Esophagus squamous epithelium (tissue), 5 donors: ENCODE measurements at regions of chr7 and their contacts with region 1.

Region 1: GRCh38 chr7:71961283-71961682 is 450.9 kb downstream of the CALN1 start:
- DNase-seq: no peak
- H3K4me3 ChIP-seq: no peak overlapping the region
- H3K27ac ChIP-seq: no peak overlapping the region
- H3K4me1 ChIP-seq: no peaks in the 10 kb centered on the region
- H3K27me3 ChIP-seq: no peaks in the 10 kb centered on the region
- CTCF ChIP-seq: no peak
- POLR2A ChIP-seq: no peak

Region 2: GRCh38 chr7:71896535-71896934 is 64.7 kb before region 1 on chr7:
- intact Hi-C with region 1: loop called (anchors 10 kb)
- DNase-seq: no peak
- H3K4me3 ChIP-seq: no peak overlapping the region
- H3K27ac ChIP-seq: no peak overlapping the region
- H3K4me1 ChIP-seq: no peaks in the 10 kb centered on the region
- H3K27me3 ChIP-seq: no peaks in the 10 kb centered on the region
- CTCF ChIP-seq: no peak
- POLR2A ChIP-seq: no peak

Region 3: DNA sequence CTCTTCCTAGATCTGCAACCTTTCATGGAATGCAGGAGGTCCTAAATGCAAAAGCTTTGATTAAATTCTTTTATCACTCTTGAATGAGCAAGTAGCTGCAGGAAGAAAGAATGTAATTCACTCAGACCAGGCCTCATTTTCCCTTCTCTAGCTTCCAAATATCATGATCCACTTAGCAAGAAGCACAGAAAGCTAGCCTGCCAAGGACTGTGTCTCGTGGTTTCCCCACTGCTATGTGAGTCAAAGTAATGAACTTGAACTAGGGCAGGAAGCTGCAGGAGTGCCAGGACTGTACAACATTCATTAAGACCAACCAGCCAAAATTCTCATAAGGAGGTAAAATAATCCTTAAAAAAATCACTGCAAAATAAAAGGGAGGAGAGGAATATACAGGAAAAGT is 71.7 kb after region 1 on chr7:
- intact Hi-C with region 1: no loop called
- DNase-seq: no peak
- H3K4me3 ChIP-seq: no peak overlapping the region
- H3K27ac ChIP-seq: no peak overlapping the region
- H3K4me1 ChIP-seq: no peaks in the 10 kb centered on the region
- H3K27me3 ChIP-seq: no peaks in the 10 kb centered on the region
- CTCF ChIP-seq: no peak
- POLR2A ChIP-seq: no peak

Region 4: DNA sequence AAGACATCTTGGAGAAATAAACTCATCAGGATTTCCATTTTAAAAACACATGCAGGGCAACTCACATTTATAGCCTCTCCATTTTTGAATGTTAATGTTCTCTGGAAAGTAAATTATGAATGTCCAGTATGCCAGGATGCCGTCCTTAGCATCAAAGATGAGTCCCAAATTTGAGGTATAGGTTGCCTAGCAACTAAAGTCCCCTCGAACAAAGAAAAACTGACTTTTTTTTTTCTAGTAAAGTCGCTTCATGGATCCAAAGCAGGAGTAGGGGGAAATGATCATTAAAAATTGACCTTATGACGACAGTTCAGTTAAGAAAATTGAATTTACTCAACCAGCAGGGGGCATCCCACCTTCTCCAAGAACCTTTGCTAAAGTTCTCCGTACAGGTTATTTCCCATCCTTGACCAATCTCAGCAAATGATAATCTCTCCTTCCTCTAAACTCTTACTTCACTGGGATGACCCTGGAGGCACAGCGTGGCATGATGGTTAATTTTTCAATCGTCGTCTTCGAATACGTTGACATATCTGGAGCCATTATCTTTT is 222.5 kb after region 1 on chr7:
- intact Hi-C with region 1: no loop called
- DNase-seq: no peak
- H3K4me3 ChIP-seq: no peak overlapping the region
- H3K27ac ChIP-seq: no peak overlapping the region
- H3K4me1 ChIP-seq: no peaks in the 10 kb centered on the region
- H3K27me3 ChIP-seq: no peaks in the 10 kb centered on the region
- CTCF ChIP-seq: peak in 2 of 6 experiments; percentile 5 to 27
- POLR2A ChIP-seq: no peak